Activated naive CD8-positive, alpha-beta T cell treated with anti-CD3 and anti-CD28 coated beads, Interleukin-2, amount 10 ng/mL, durations not matched to agents 7 days and 5 days (primary cell): ENCODE measurements at regions of chr19 and their contacts with region 1.

Region 1: GRCh38 chr19:14517840-14518505 is at the start of gene DNAJB1:
- DNase-seq: peak; percentile 85
- ATAC-seq: peak; percentile 62
- H3K4me3 Mint-ChIP-seq: peak within 1 kb of the TSS; percentile 92
- H3K27ac Mint-ChIP-seq: peak within 1 kb of the TSS; percentile 97
- H3K4me1 Mint-ChIP-seq: peaks cover 60% of the 10 kb centered on the region
- H3K27me3 Mint-ChIP-seq: no peaks in the 10 kb centered on the region
- total RNA-seq, gene DNAJB1: 103 to 110 TPM

Region 2: GRCh38 chr19:14349426-14349825 is 168.5 kb before region 1 on chr19:
- POLR2A ChIA-PET with region 1: no interaction called
- DNase-seq: no peak
- ATAC-seq: peak; percentile 54
- H3K4me3 Mint-ChIP-seq: peak overlapping the region; percentile 44
- H3K27ac Mint-ChIP-seq: peak overlapping the region; percentile 72
- H3K4me1 Mint-ChIP-seq: peaks cover 20% of the 10 kb centered on the region
- H3K27me3 Mint-ChIP-seq: no peaks in the 10 kb centered on the region

Region 3: GRCh38 chr19:14450168-14450874 is 67.7 kb before region 1 on chr19:
- POLR2A ChIA-PET with region 1: no interaction called
- DNase-seq: peak; percentile 68
- ATAC-seq: peak; percentile 84
- H3K4me3 Mint-ChIP-seq: no peak overlapping the region
- H3K27ac Mint-ChIP-seq: no peak overlapping the region
- H3K4me1 Mint-ChIP-seq: peaks cover 6% of the 10 kb centered on the region
- H3K27me3 Mint-ChIP-seq: no peaks in the 10 kb centered on the region

Region 4: DNA sequence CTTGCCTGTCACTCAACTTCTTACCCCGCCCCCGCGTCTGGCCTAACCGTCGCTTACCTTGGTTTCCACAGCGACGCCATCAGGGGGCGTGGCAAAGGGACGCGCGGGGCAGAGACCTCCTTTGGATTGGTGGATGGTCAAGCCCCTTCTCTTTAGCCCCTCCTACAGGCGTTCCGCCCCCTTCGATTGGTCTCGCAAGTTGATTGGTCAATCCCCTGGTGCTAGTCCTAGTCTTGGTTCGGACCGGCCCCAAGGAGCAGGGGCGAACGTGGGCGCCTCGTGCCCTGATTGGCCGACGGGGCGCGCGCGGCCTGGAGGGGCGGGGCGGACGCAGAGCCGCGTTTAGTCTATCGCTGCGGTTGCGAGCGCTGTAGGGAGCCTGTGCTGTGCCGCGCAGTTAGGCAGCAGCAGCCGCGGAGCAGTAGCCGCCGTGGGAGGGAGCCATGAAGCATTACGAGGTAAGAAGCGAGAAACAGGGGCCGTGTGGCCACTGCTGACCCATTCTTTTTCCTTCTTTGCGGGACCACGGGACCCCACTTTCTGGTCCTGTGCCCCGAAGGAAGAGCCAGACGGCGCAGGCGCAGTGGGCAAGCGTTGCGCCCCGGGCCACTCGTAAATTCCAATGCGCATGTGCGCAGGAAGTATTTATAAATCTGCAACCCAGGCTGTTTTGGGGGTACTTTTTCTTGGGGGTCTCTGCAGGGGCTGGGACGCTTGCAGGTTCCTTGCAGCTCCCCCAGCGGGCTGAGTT is 11.5 kb after region 1 on chr19 and contains the start of gene TECR:
- POLR2A ChIA-PET with region 1: interaction called, 34 read pairs
- DNase-seq: peak; percentile 100
- ATAC-seq: peak; percentile 97
- H3K4me3 Mint-ChIP-seq: peak within 1 kb of the TSS; percentile 97
- H3K27ac Mint-ChIP-seq: peak within 1 kb of the TSS; percentile 96
- H3K4me1 Mint-ChIP-seq: peaks cover 13% of the 10 kb centered on the region
- H3K27me3 Mint-ChIP-seq: no peaks in the 10 kb centered on the region
- total RNA-seq, gene TECR: 161 to 168 TPM

Region 5: DNA sequence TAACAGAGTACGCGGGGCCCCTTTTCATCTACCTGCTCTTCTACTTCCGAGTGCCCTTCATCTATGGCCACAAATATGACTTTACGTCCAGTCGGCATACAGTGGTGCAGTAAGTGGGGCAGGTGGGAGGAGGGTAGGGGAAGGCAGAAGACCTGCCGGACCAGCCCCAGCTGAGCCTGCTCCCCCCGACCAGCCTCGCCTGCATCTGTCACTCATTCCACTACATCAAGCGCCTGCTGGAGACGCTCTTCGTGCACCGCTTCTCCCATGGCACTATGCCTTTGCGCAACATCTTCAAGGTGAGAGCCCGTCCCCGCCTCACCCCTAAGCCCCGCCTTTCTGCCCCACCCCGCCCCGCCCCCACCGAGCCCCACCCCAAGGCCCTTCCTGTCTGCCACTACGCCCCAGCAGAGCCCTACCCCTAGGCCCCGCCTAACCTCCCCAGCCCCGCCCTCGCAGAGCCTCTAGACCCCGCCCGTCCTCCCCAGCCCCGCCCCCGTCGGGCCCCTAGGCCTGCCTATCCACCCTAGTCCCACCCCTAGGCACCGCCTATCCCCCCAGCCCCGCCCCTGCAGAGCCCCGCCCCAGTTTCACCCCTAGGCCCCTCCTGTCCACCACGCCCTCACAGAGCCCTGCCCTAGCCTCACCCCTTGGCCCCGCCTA is 46.1 kb after region 1 on chr19:
- POLR2A ChIA-PET with region 1: no interaction called
- DNase-seq: peak; percentile 61
- ATAC-seq: peak; percentile 57
- H3K4me3 Mint-ChIP-seq: no peak overlapping the region
- H3K27ac Mint-ChIP-seq: peak overlapping the region; percentile 67
- H3K4me1 Mint-ChIP-seq: peaks cover 14% of the 10 kb centered on the region
- H3K27me3 Mint-ChIP-seq: no peaks in the 10 kb centered on the region